ENCODE measurements at regions of chr22 and their contacts with region 1.

Region 1: GRCh38 chr22:42901790-42902508 is 44.9 kb upstream of the ARFGAP3 start:
- DNase-seq: no peak
- H3K4me3 Mint-ChIP-seq: no peak overlapping the region
- H3K27ac Mint-ChIP-seq: no peak overlapping the region
- H3K4me1 Mint-ChIP-seq: no peaks in the 10 kb centered on the region
- H3K27me3 Mint-ChIP-seq: no peaks in the 10 kb centered on the region

Region 2: DNA sequence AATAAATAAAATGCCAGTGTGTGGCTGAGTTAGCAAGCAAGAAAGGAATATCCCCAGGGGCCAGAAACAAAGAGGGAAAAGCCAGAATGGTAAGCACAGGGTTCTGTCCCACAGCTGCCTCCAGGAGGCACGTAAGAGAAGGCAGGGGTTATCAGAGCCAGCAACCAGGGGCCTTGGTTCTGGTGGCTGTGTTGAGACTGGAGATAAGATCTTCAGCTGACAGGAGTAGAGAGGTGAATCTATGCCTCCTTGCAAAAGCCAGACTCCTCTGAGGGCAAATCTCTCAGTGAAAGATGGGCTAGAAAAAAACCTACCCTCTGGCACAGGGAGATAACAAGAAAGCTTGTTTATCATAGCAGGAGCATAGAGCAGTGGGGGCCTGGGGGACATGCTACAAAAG is 439.9 kb before region 1 on chr22:
- CTCF ChIA-PET with region 1: no interaction called
- DNase-seq: no peak
- H3K4me3 Mint-ChIP-seq: no peak overlapping the region
- H3K27ac Mint-ChIP-seq: no peak overlapping the region
- H3K4me1 Mint-ChIP-seq: no peaks in the 10 kb centered on the region
- H3K27me3 Mint-ChIP-seq: peaks cover 56% of the 10 kb centered on the region

Region 3: GRCh38 chr22:42863349-42863961 is 38.5 kb before region 1 on chr22:
- CTCF ChIA-PET with region 1: interaction called, 10 read pairs
- DNase-seq: peak; percentile 28
- H3K4me3 Mint-ChIP-seq: no peak overlapping the region
- H3K27ac Mint-ChIP-seq: no peak overlapping the region
- H3K4me1 Mint-ChIP-seq: peaks cover 9% of the 10 kb centered on the region
- H3K27me3 Mint-ChIP-seq: peaks cover 5% of the 10 kb centered on the region

Region 4: DNA sequence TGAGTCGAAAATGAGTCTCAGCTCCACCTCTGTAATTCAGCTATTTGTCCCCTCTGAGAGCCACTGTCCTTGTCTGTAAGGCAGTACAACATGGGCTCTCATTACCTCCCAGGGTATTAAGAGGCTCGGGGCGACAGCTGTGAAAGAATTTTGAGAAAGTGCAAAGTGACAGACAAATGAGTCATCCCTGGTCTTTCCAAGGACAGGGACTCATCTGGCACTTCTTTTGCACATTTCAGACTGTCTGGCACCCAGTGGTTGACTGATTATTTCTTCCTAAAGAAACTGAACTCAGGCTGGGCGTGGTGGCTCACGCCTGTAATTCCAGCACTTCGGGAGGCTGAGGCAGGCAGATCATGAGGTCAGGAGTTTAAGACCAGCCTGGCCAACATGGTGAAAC is 17.2 kb after region 1 on chr22:
- CTCF ChIA-PET with region 1: no interaction called
- DNase-seq: no peak
- H3K4me3 Mint-ChIP-seq: no peak overlapping the region
- H3K27ac Mint-ChIP-seq: no peak overlapping the region
- H3K4me1 Mint-ChIP-seq: peaks cover 12% of the 10 kb centered on the region
- H3K27me3 Mint-ChIP-seq: no peaks in the 10 kb centered on the region

Region 5: DNA sequence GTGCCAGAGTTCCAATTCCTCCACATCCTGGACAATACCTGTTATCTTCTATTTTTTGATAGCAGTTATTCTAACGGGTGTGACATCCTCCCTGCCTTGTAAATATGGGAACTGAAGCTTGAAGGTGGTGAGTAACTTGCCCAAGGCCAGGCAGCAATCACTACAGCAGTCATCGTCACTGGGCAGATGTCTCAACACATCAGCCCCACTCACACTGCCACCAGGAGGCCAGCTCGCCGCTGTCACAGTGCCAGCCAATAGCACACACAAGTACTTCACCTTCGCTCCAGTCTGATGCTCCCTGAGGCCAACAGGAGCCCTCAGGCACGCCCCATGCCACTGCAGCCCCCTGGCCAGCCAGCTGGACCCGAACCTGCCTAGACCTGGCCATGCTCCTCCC is 192.1 kb after region 1 on chr22:
- CTCF ChIA-PET with region 1: no interaction called
- DNase-seq: no peak
- H3K4me3 Mint-ChIP-seq: no peak overlapping the region
- H3K27ac Mint-ChIP-seq: no peak overlapping the region
- H3K4me1 Mint-ChIP-seq: peaks cover 12% of the 10 kb centered on the region
- H3K27me3 Mint-ChIP-seq: peaks cover 12% of the 10 kb centered on the region